ENCODE measurements at regions of chr2 and their contacts with region 1.

Region 1: GRCh38 chr2:172102391-172103278 is at the start of gene DLX2:
- DNase-seq: peak; percentile 88

Region 2: GRCh38 chr2:171703574-171704347 is 398.9 kb before region 1 on chr2:
- CTCF ChIA-PET with region 1: interaction called, 17 read pairs
- POLR2A ChIA-PET with region 1: interaction called, 10 read pairs
- DNase-seq: peak; percentile 26

Region 3: GRCh38 chr2:171922230-171923022 is 180.2 kb before region 1 on chr2 and contains the start of gene HAT1:
- CTCF ChIA-PET with region 1: no interaction called
- POLR2A ChIA-PET with region 1: interaction called, 41 read pairs
- DNase-seq: peak; percentile 95

Region 4: GRCh38 chr2:172038604-172039003 is 64.0 kb before region 1 on chr2:
- CTCF ChIA-PET with region 1: interaction called, 3 read pairs
- POLR2A ChIA-PET with region 1: interaction called, 33 read pairs
- DNase-seq: peak; percentile 45

Region 5: GRCh38 chr2:172084734-172085459 is 17.7 kb before region 1 on chr2:
- CTCF ChIA-PET with region 1: no interaction called
- POLR2A ChIA-PET with region 1: interaction called, 135 read pairs
- DNase-seq: peak; percentile 88